HCT116 (cell line): ENCODE measurements at regions of chr1 and their contacts with region 1.

Region 1: DNA sequence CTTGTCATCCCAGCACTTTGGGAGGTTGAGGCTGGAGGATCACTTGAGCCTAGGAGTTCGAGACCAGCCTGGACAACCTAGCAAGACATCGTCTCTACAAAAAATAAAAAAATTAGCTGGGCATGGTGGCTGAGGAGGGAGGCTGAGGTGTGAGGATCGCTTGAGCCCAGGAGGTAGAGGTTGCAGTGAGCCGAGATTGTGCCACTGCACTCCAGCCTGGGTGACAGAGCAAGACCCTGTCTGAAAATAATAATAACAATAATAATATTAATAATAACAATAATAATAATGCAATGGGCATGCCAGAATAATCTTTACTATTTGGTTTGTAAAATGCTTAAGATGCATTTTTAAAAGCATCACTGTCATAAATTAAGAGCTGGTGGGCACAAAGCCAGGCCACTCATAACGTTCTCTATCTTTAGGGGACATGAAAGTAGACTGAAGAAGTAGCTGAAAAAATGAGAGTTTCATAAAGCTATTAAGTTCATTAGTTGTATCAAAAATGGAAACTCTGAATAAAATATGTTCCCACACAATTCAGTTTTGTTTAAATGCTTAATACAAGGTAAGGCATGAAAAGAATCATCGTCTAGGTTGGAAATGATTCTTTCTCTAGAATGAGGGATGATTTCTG is 51.6 kb upstream of the ITPKB start:
- DNase-seq: no peak
- ATAC-seq: no peak
- H3K4me3 ChIP-seq: no peak overlapping the region
- H3K27ac ChIP-seq: no peak overlapping the region
- H3K4me1 ChIP-seq: no peaks in the 10 kb centered on the region
- H3K27me3 ChIP-seq: no peaks in the 10 kb centered on the region
- CTCF ChIP-seq: no peak
- POLR2A ChIP-seq: no peak
- RAD21 ChIP-seq: no peak

Region 2: DNA sequence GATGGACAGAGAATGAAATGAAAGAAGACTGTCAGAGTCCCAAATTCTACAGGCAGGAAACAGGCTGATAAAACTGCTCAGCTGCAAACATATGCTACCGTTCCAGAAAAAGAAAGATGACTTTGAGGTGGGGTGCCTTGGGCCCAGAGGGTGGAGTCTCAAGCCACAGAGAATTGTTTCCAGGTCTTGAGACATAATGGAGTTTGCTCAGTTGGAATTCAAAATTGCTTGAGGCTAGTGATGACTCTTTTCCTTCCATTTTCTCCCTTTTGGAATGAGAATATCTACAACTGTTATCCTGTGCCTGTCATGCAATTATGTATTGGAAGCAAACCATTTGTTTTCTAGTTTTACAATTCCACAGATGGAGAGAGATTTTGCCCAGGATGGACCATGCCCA is 56.1 kb after region 1 on chr1:
- CTCF ChIA-PET with region 1: no interaction called
- POLR2A ChIA-PET with region 1: no interaction called
- RAD21 ChIA-PET with region 1: no interaction called
- intact Hi-C with region 1: loop called (anchors 5 kb)
- DNase-seq: no peak
- ATAC-seq: no peak
- H3K4me3 ChIP-seq: no peak overlapping the region
- H3K27ac ChIP-seq: no peak overlapping the region
- H3K4me1 ChIP-seq: no peaks in the 10 kb centered on the region
- H3K27me3 ChIP-seq: no peaks in the 10 kb centered on the region
- CTCF ChIP-seq: no peak
- POLR2A ChIP-seq: no peak
- RAD21 ChIP-seq: no peak